Dorsolateral prefrontal cortex (tissue), 120 donors: ENCODE measurements at regions of chr5 and their contacts with region 1.

Region 1: GRCh38 chr5:134184155-134185135 is 7.7 kb upstream of the SKP1 start:
- DNase-seq: peak; percentile 40 to 81 (median 58)
- H3K4me3 ChIP-seq: no peak overlapping the region
- H3K27ac ChIP-seq: no peak overlapping the region
- H3K27me3 ChIP-seq: no peaks in the 10 kb centered on the region
- CTCF ChIP-seq: peak; percentile 38 to 98 (median 91)

Region 2: DNA sequence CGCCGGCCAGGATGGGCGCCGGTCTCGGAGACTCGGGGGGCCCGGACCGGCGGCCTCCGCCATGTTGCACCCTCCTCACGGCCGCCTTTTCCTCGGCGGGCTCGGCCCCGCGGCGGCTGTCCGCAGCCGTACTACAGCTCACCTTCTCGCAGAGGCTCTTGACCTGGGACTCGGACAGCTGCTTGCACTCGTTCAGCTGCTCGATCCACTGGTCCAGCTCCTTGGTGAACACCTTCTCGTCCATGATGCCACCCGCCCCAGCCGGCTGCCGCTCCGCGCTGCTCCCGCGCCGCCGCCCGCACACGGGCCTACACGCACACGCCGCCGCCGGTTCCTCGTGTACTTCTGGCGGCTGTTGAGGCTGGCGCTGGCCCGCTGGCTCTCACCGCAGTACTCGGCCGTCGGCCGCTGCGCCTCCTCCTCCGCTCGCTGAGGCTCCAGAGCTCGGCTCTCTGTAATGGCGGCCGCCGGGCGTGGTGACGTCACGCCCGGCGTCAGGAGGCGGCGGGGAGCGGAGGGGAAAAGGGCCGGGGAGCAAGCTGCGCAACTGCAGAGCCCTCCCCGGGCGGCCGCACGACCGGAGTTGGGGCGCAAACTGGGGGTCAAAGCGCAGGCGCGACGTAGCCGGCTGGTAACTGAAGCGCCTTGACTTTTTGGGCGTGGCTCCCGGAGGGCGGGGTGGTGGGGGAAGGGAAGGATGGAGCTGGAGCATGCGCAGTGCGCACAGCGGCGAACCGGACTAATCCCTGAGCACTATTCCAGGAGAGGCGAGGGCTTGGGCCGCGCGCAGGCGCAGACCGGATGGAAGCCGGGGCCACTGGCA is 41.4 kb after region 1 on chr5 and contains the start of gene PPP2CA:
- intact Hi-C with region 1: loop called (anchors 2 to 5 kb)
- DNase-seq: peak; percentile 96 to 99 (median 98)
- H3K4me3 ChIP-seq: peak within 1 kb of the TSS; percentile 76 to 100 (median 98)
- H3K27ac ChIP-seq: peak within 1 kb of the TSS; percentile 96 to 100 (median 99)
- H3K27me3 ChIP-seq: no peaks in the 10 kb centered on the region
- CTCF ChIP-seq: peak in 26 of 56 donors; percentile 2 to 41 (median 18)
- total RNA-seq, gene PPP2CA: 82.2 to 254 (median 188) TPM

Region 3: DNA sequence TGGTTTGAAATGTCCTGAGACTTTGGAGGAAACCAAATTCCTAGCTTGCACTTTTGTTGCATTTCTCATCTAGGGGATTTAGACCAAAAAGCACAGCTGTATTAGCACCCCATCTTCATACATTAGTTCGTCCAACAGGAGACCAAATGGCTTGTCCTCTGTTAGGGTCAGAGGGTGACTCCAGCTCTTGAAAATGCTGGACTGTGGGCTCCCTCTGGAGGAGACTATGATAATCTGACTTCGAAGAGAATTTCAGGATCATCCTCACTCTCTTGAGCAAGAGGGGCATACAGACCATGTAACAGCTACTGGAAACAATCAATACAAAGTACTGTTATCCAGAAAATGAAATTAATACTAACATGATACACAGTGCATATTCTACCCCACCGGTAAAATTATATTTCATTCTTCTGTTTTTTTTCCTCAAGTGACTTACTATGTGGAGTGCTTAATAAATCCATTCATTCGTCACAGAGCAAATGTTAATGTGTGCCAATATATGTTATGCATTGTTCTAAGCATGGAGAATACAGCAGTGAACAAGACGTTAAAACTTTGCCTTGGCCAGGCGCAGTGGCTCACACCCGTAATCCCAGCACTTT is 105.2 kb after region 1 on chr5:
- intact Hi-C with region 1: loop called (anchors 1 to 2 kb)
- DNase-seq: peak in 5 of 10 donors; percentile 16 to 55 (median 44)
- H3K4me3 ChIP-seq: no peak overlapping the region
- H3K27ac ChIP-seq: no peak overlapping the region
- H3K27me3 ChIP-seq: no peaks in the 10 kb centered on the region
- CTCF ChIP-seq: peak; percentile 53 to 94 (median 78)

Region 4: GRCh38 chr5:134365604-134366003 is 181.2 kb after region 1 on chr5:
- intact Hi-C with region 1: loop called in 1 of 2 experiments (anchors 10 kb)
- DNase-seq: no peak
- H3K4me3 ChIP-seq: peak overlapping the region in 1 of 59 donors; percentile 93
- H3K27ac ChIP-seq: no peak overlapping the region
- H3K27me3 ChIP-seq: no peaks in the 10 kb centered on the region
- CTCF ChIP-seq: no peak

Region 5: GRCh38 chr5:134586866-134587524 is 402.6 kb after region 1 on chr5:
- intact Hi-C with region 1: loop called (anchors 10 kb)
- DNase-seq: peak in 9 of 10 donors; percentile 61 to 85 (median 74)
- H3K4me3 ChIP-seq: peak overlapping the region in 13 of 59 donors; percentile 3 to 43 (median 23)
- H3K27ac ChIP-seq: peak overlapping the region in 8 of 59 donors; percentile 10 to 63 (median 27)
- H3K27me3 ChIP-seq: no peaks in the 10 kb centered on the region
- CTCF ChIP-seq: peak; percentile 38 to 92 (median 73)